Activated CD4-positive, alpha-beta memory T cell treated with anti-CD3 and anti-CD28 coated beads for 36 hours (primary cell): ENCODE measurements at regions of chr5 and their contacts with region 1.

Region 1: DNA sequence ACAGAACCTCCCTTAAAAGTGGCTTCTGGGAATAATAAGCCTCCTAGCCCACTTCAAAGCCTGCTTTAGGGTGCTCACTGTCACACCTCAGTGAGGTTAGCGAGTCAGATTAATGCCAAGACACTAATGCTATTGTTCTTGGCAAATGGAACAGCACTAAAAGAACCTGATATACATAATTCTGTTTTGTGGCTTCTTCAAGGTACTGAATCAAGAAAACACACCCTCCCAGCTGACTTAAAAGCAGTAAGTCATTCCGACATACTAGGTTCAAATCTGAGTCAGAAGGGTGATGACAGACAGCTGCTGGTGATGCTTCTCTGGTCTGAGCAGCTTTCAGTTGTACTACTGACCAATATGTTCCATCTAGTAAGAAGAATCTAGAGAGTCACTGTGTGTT is 121.6 kb downstream of the OXCT1 start:
- DNase-seq: peak; percentile 59
- H3K4me3 Mint-ChIP-seq: no peak overlapping the region
- H3K27ac Mint-ChIP-seq: peak overlapping the region; percentile 57
- H3K4me1 Mint-ChIP-seq: peaks cover 32% of the 10 kb centered on the region
- H3K27me3 Mint-ChIP-seq: no peaks in the 10 kb centered on the region

Region 2: GRCh38 chr5:41796061-41796460 is 47.4 kb after region 1 on chr5:
- CTCF ChIA-PET with region 1: interaction called, 3 read pairs
- POLR2A ChIA-PET with region 1: no interaction called
- intact Hi-C with region 1: loop called (anchors 5 kb)
- DNase-seq: no peak
- H3K4me3 Mint-ChIP-seq: no peak overlapping the region
- H3K27ac Mint-ChIP-seq: no peak overlapping the region
- H3K4me1 Mint-ChIP-seq: peaks cover 12% of the 10 kb centered on the region
- H3K27me3 Mint-ChIP-seq: no peaks in the 10 kb centered on the region

Region 3: DNA sequence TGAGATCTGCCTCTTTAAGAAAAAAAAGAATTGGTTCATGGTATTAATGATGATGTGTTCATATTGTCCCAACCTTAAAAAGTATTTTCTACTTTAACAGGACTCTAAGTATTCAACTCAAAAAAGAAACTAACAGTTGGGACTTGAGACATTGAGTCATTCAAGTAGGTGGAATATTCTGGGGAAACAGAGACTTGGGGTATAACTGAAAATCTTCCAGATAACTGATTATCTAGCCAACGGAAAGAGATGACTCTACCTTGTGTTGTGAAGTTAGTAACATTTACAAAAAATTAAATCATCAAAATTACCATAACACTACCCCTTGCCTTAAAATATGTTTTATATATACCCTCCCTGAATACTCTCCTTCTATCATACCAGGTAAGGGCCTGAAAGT is 102.5 kb after region 1 on chr5:
- CTCF ChIA-PET with region 1: interaction called, 3 read pairs
- POLR2A ChIA-PET with region 1: no interaction called
- intact Hi-C with region 1: loop called (anchors 2 kb)
- DNase-seq: no peak
- H3K4me3 Mint-ChIP-seq: no peak overlapping the region
- H3K27ac Mint-ChIP-seq: peak overlapping the region; percentile 86
- H3K4me1 Mint-ChIP-seq: peaks cover 31% of the 10 kb centered on the region
- H3K27me3 Mint-ChIP-seq: no peaks in the 10 kb centered on the region

Region 4: DNA sequence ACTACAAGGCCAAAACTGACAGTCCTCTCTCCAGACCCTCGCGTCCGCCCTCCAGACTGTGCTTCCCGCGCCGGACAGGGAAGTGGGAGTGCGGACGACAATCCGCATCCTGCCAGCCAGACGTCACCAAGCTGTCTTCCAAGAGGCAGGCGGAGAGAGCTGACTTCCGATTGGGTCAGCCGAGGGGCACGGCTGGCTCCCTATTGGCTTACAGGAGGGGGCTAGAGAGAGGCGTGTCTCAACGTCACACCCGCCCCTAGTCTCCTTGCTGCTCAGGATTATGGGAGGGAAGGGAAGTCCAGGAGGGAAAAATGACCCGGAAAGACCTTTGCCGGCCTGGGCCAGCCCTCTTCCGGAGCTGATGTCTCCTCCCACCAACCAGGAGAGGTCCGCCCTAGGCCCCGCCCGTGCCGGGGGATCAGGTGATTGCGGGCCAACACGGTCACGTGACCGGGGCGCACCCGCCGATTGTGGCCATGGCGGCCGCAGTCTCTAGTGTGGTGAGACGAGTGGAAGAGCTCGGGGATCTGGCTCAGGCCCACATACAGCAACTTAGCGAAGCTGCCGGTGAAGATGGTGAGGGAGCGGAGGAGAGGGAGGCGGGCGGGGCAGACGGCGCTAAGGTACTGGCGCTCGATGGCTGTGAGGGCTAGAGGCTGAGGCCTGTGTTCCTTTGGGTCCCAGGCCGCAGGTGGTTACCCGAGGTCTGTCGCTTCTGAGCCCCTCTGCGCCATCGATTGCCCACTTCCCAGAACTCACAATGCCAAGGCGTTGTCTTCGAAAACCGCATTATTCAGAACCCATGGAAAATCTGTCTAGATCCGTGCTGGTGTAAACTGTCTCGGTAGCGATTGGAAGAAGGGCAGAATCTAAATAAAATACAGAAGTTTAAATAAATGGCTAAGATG is 155.5 kb after region 1 on chr5 and contains the start of gene RIMOC1:
- CTCF ChIA-PET with region 1: no interaction called
- POLR2A ChIA-PET with region 1: no interaction called
- intact Hi-C with region 1: loop called (anchors 1 kb)
- DNase-seq: peak; percentile 99
- H3K4me3 Mint-ChIP-seq: peak within 1 kb of the TSS; percentile 91
- H3K27ac Mint-ChIP-seq: peak within 1 kb of the TSS; percentile 93
- H3K4me1 Mint-ChIP-seq: peaks cover 37% of the 10 kb centered on the region
- H3K27me3 Mint-ChIP-seq: peaks cover 2% of the 10 kb centered on the region
- total RNA-seq, gene RIMOC1: 25.0 to 25.8 TPM